ENCODE measurements at regions of chr1 and their contacts with region 1.

Region 1: GRCh38 chr1:223726380-223727001 is 14.2 kb downstream of the CAPN2 start:
- DNase-seq: peak in 1 of 2 experiments; percentile 64
- H3K4me3 ChIP-seq: no peak overlapping the region
- H3K27ac ChIP-seq: 0 out of 2 replicates have a peak overlapping the region, but pooled peaks have one; percentile 25
- H3K4me1 ChIP-seq: peaks cover 9 to 25% (median 16%) of the 10 kb centered on the region in 4 experiments
- H3K27me3 ChIP-seq: peaks cover 7 to 50% (median 41%) of the 10 kb centered on the region in 4 experiments
- CTCF ChIP-seq: no peak
- EP300 ChIP-seq: no peak
- POLR2A ChIP-seq: no peak
- RAD21 ChIP-seq: no peak

Region 2: GRCh38 chr1:223738465-223739365 is 12.2 kb after region 1 on chr1:
- CTCF ChIA-PET with region 1: interaction called, 14 read pairs
- POLR2A ChIA-PET with region 1: interaction called, 4 read pairs
- DNase-seq: no peak
- H3K4me3 ChIP-seq: no peak overlapping the region
- H3K27ac ChIP-seq: no peak overlapping the region
- H3K4me1 ChIP-seq: peaks cover under 1 to 11% (median 5%) of the 10 kb centered on the region in 4 experiments; a peak in 4 of 7 replicates
- H3K27me3 ChIP-seq: no peaks in the 10 kb centered on the region; a peak in 1 of 7 replicates
- CTCF ChIP-seq: no peak
- EP300 ChIP-seq: no peak
- POLR2A ChIP-seq: no peak
- RAD21 ChIP-seq: no peak